ENCODE measurements at regions of chr12 and their contacts with region 1.

Region 1: GRCh38 chr12:74365178-74365964 is 172.3 kb upstream of the ATXN7L3B start:
- DNase-seq: no peak

Region 2: DNA sequence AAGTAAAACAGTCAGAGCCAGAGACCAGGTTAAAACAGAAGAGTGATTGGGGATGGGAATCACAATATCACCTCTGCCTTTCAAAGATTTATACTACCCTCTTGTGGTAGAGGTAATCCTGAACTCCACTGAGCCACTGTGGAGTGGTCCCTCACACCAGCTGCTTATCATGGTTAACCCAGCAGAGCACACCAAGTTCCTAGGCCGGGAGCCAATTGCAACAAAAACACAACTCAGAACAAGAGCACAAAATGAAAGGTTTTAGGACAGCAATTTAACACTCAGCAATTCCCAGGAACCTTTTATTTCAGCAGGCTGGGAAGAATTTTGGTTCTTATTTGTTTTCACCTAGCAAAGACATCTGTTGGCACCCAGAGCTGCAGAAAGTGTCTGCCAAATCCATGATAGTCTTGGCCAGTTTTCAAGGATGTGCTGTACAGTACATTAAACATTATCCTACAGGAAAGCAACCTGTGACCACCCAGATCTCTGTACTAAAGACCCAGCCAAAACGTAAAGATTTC is 48.2 kb before region 1 on chr12:
- intact Hi-C with region 1: no loop called
- DNase-seq: no peak

Region 3: GRCh38 chr12:74381958-74382357 is 16.6 kb after region 1 on chr12:
- intact Hi-C with region 1: loop called (anchors 2 kb)
- DNase-seq: no peak

Measured in cardiac septum (tissue), 1 donor.